ENCODE measurements at regions of chr1 and their contacts with region 1.

Region 1: DNA sequence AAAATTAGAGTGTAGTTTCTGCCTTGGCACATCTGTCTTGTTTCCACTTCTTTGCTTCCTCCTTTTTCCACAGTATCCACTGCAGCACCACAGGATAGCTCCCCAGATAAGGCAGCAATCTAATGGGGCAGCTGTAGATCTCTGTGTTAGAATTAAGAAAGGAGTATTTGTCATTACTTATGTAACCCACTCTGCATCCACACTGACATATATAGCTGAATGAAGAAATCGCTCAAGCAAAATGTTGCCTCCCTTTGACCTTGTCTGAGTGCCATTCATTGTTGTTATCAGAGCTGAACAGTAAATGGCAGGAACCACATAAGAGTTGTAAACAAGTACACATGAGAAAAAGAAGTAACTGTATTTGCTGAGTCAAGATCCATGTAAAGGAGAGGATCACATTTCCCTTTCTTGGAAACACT is 45.9 kb upstream of the DPH5 start:
- DNase-seq: no peak
- ATAC-seq: no peak
- H3K4me3 ChIP-seq: no peak overlapping the region
- H3K4me3 Mint-ChIP-seq: no peak overlapping the region
- H3K27ac ChIP-seq: no peak overlapping the region
- H3K27ac Mint-ChIP-seq: no peak overlapping the region
- H3K4me1 ChIP-seq: peaks cover 22% of the 10 kb centered on the region
- H3K4me1 Mint-ChIP-seq: peaks cover 48% of the 10 kb centered on the region
- H3K27me3 ChIP-seq: no peaks in the 10 kb centered on the region
- H3K27me3 Mint-ChIP-seq: no peaks in the 10 kb centered on the region
- CTCF ChIP-seq: no peak

Region 2: DNA sequence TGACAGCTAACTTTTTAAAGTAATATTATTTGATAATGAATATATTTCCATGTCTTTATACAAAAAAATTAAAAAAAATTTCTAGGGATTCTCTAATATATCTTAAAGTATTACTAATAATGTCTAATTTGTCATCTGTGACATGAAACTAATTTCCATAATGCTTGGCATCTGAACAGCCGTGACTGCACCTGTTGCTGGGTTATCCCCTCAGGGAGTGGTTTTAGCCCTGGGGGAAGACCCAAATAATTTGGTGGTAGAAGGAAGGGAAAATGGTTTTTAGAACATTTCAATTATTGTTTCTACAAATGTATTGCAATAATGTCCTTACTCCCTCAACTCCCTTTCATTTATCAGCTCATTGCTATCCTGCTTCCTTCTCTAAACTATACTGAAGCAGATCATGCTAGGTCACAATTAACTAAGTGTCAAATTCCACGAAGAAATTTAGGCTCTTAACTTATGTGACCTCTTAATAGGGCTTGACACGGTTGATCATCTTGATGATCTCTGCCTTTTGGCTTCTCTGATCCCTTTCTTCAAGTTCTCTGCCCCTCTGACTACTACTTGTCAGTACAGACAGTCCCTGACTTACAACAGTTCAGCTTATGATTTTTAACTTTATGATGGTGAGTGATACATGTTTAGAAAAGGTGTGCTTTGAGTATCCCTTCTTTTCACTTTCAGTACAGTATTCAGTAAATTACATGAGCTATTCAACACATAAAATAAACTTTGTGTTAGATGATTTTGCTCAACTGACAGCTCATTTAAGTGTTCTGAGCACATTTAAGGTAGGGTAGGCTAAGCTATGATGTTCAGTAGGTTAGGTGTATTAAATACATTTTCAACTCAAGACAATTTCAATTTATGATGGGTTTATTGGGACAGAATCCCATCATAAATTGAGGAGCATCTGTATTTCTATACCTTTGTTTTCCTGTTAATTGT is 19.5 kb before region 1 on chr1:
- CTCF ChIA-PET with region 1: interaction called, 4 read pairs
- POLR2A ChIA-PET with region 1: no interaction called
- intact Hi-C with region 1: loop called in 1 of 2 experiments (anchors 2 kb)
- DNase-seq: no peak
- ATAC-seq: no peak
- H3K4me3 ChIP-seq: no peak overlapping the region
- H3K4me3 Mint-ChIP-seq: no peak overlapping the region
- H3K27ac ChIP-seq: no peak overlapping the region
- H3K27ac Mint-ChIP-seq: peak overlapping the region; percentile 47
- H3K4me1 ChIP-seq: no peaks in the 10 kb centered on the region
- H3K4me1 Mint-ChIP-seq: peaks cover 31% of the 10 kb centered on the region
- H3K27me3 ChIP-seq: no peaks in the 10 kb centered on the region
- H3K27me3 Mint-ChIP-seq: no peaks in the 10 kb centered on the region
- CTCF ChIP-seq: no peak

Region 3: DNA sequence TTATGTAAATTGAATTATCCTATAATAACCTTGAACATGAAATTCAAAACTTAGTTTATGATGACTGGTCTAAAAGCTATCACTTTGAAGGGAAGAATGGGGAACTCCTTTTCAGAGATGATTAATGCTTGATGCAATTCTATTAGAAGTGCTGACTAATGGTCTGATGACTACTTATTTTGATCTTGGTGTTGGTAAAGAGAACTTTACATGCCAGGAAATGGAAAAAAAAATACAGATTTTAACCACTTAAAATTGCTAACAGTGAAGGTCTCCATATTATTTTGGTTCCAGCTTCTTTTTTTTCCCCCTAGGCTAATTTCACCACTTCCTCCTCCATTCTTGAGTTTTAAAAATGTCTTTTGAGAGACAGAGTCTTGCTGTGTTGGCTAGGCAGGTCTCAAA is 188.3 kb after region 1 on chr1:
- CTCF ChIA-PET with region 1: no interaction called
- POLR2A ChIA-PET with region 1: no interaction called
- intact Hi-C with region 1: no loop called
- DNase-seq: peak in 2 of 9 experiments; percentile 33 to 56
- ATAC-seq: peak; percentile 16
- H3K4me3 ChIP-seq: no peak overlapping the region
- H3K4me3 Mint-ChIP-seq: no peak overlapping the region
- H3K27ac ChIP-seq: peak overlapping the region in 1 of 2 experiments; percentile 10
- H3K27ac Mint-ChIP-seq: peak overlapping the region; percentile 52
- H3K4me1 ChIP-seq: peaks cover 73% of the 10 kb centered on the region
- H3K4me1 Mint-ChIP-seq: peaks cover 71% of the 10 kb centered on the region
- H3K27me3 ChIP-seq: no peaks in the 10 kb centered on the region
- H3K27me3 Mint-ChIP-seq: no peaks in the 10 kb centered on the region
- CTCF ChIP-seq: no peak